CD8-positive, alpha-beta T cell (primary cell): ENCODE measurements at regions of chr9 and their contacts with region 1.

Region 1: GRCh38 chr9:16553869-16554540 is 316.5 kb downstream of the BNC2 start:
- DNase-seq: no peak
- ATAC-seq: no peak
- H3K4me3 ChIP-seq: no peak overlapping the region
- H3K4me3 Mint-ChIP-seq: no peak overlapping the region
- H3K27ac ChIP-seq: no peak overlapping the region
- H3K27ac Mint-ChIP-seq: no peak overlapping the region
- H3K4me1 ChIP-seq: no peaks in the 10 kb centered on the region
- H3K4me1 Mint-ChIP-seq: no peaks in the 10 kb centered on the region
- H3K27me3 ChIP-seq: no peaks in the 10 kb centered on the region
- H3K27me3 Mint-ChIP-seq: peaks cover 2% of the 10 kb centered on the region
- CTCF ChIP-seq: no peak

Region 2: DNA sequence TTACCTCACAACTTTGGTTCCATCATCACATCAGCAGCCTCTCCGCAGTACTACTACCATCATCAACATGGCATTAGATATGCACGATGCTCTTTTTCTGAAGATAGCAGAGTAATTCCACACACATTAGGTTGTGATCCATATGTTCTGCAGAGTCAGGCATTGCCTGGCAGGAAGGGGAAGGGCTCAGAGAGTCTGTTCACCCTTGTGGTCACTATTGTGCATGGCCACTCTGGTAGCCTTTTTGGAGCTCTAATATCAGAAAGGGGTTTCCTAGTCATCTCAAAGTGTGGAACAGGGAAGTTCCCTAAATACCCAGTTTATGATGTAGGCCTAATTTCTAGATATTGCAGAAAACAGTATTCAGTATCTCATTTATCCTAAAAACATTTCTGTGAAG is 57.1 kb before region 1 on chr9:
- CTCF ChIA-PET with region 1: no interaction called
- POLR2A ChIA-PET with region 1: no interaction called
- intact Hi-C with region 1: loop called in 1 of 2 experiments (anchors 10 kb)
- DNase-seq: no peak
- ATAC-seq: no peak
- H3K4me3 ChIP-seq: no peak overlapping the region
- H3K4me3 Mint-ChIP-seq: no peak overlapping the region
- H3K27ac ChIP-seq: no peak overlapping the region
- H3K27ac Mint-ChIP-seq: no peak overlapping the region
- H3K4me1 ChIP-seq: no peaks in the 10 kb centered on the region
- H3K4me1 Mint-ChIP-seq: no peaks in the 10 kb centered on the region
- H3K27me3 ChIP-seq: no peaks in the 10 kb centered on the region
- H3K27me3 Mint-ChIP-seq: no peaks in the 10 kb centered on the region
- CTCF ChIP-seq: no peak